ENCODE measurements at regions of chr17 and their contacts with region 1.

Region 1: GRCh38 chr17:72539981-72540897 is 419.4 kb downstream of the SOX9 start:
- DNase-seq: peak; percentile 45
- ATAC-seq: peak; percentile 93
- H3K4me3 ChIP-seq: peak overlapping the region; percentile 19 to 23
- H3K27ac ChIP-seq: peak overlapping the region; percentile 34
- H3K4me1 ChIP-seq: peaks cover 7 to 18% of the 10 kb centered on the region in 2 experiments
- H3K27me3 ChIP-seq: no peaks in the 10 kb centered on the region
- CTCF ChIP-seq: peak; percentile 45 to 91 (median 78); a peak in 5 of 6 replicates
- POLR2A ChIP-seq: no peak
- RAD21 ChIP-seq: peak; percentile 95

Region 2: GRCh38 chr17:70636517-70637133 is 1903.6 kb before region 1 on chr17:
- CTCF ChIA-PET with region 1: no interaction called
- POLR2A ChIA-PET with region 1: no interaction called
- RAD21 ChIA-PET with region 1: no interaction called
- intact Hi-C with region 1: loop called (anchors 2 kb)
- DNase-seq: peak; percentile 54
- ATAC-seq: peak; percentile 63
- H3K4me3 ChIP-seq: no peak overlapping the region
- H3K27ac ChIP-seq: no peak overlapping the region
- H3K4me1 ChIP-seq: no peaks in the 10 kb centered on the region
- H3K27me3 ChIP-seq: no peaks in the 10 kb centered on the region
- CTCF ChIP-seq: peak; percentile 61 to 86 (median 70); a peak in 5 of 6 replicates
- POLR2A ChIP-seq: no peak
- RAD21 ChIP-seq: peak; percentile 91

Region 3: DNA sequence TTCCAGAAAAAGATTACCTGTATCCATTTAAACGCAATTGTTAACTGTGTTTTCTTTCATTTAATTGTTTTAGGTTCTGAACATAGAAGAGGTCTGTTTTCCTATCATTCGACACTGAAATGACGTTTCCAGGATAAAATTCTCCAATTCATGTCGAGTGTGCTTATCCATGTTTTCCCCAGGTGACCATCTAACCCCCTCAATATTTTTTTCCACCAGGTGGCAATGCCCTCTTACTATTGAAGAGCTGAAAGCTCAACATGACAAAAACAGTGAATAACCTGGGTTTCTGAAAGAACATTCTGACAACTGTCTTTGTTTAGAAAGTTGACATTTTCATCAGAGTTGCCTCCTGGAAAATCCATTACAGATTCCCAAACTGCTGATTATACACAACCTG is 1422.2 kb before region 1 on chr17:
- CTCF ChIA-PET with region 1: interaction called, 5 read pairs
- POLR2A ChIA-PET with region 1: no interaction called
- RAD21 ChIA-PET with region 1: no interaction called
- intact Hi-C with region 1: loop called (anchors 1 kb)
- DNase-seq: peak; percentile 29
- ATAC-seq: peak; percentile 46; the same call in 1 of the 2 replicates
- H3K4me3 ChIP-seq: no peak overlapping the region
- H3K27ac ChIP-seq: no peak overlapping the region
- H3K4me1 ChIP-seq: no peaks in the 10 kb centered on the region
- H3K27me3 ChIP-seq: no peaks in the 10 kb centered on the region
- CTCF ChIP-seq: peak; percentile 55 to 77 (median 66); a peak in 5 of 6 replicates
- POLR2A ChIP-seq: no peak
- RAD21 ChIP-seq: peak; percentile 86

Region 4: GRCh38 chr17:71472809-71473789 is 1067.1 kb before region 1 on chr17:
- CTCF ChIA-PET with region 1: interaction called, 5 read pairs
- POLR2A ChIA-PET with region 1: no interaction called
- RAD21 ChIA-PET with region 1: no interaction called
- intact Hi-C with region 1: loop called (anchors 1 kb)
- DNase-seq: peak; percentile 86
- ATAC-seq: peak; percentile 99
- H3K4me3 ChIP-seq: no peak overlapping the region
- H3K27ac ChIP-seq: no peak overlapping the region
- H3K4me1 ChIP-seq: peaks cover 0 to 11% of the 10 kb centered on the region in 2 experiments; a peak in 2 of 4 replicates
- H3K27me3 ChIP-seq: no peaks in the 10 kb centered on the region
- CTCF ChIP-seq: peak; percentile 79 to 93 (median 88)
- POLR2A ChIP-seq: no peak
- RAD21 ChIP-seq: peak; percentile 89

Region 5: DNA sequence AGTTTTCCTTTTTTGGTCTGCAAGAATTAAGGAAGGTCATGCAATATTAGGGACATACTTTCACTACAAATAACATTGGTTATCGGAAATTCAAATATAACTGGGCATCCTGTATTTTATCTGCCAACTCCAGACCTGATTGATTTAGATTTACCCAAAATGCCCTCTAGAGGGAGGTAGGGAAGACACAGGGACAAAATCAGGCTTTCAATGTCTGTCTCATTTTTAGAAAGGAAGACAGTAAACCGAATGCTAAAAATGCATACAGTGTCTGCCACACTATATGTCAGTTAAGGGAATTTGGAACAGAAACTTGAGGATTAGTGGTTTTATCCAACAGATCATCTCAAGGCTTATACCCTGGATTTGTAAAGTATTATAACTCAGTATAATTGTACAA is 581.1 kb before region 1 on chr17:
- CTCF ChIA-PET with region 1: no interaction called
- POLR2A ChIA-PET with region 1: no interaction called
- RAD21 ChIA-PET with region 1: no interaction called
- intact Hi-C with region 1: loop called (anchors 5 kb)
- DNase-seq: peak; percentile 49
- ATAC-seq: peak; percentile 92
- H3K4me3 ChIP-seq: no peak overlapping the region
- H3K27ac ChIP-seq: no peak overlapping the region
- H3K4me1 ChIP-seq: no peaks in the 10 kb centered on the region
- H3K27me3 ChIP-seq: no peaks in the 10 kb centered on the region
- CTCF ChIP-seq: peak; percentile 58 to 84 (median 77); a peak in 5 of 6 replicates
- POLR2A ChIP-seq: no peak
- RAD21 ChIP-seq: peak; percentile 71

Region 6: DNA sequence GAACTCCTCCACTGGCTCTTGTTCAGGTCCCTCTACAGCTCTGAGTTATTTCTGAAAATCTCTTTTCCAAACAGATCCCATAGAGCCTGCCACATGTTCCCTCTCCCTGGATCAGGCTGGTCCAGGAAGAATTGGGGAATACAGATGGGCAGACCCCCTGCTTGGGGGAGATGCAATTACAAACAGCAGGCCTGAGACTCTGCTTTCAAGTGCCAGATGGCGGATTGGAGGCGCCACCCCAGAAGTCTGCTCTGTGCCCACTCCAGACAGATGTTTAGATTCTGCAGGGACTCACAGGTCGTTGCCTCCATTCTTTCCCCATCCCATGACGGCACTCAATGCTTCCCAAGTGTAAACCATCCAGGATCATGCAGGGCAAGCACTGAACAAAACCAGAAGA is 235.7 kb after region 1 on chr17:
- CTCF ChIA-PET with region 1: no interaction called
- POLR2A ChIA-PET with region 1: no interaction called
- RAD21 ChIA-PET with region 1: no interaction called
- intact Hi-C with region 1: no loop called
- DNase-seq: no peak
- ATAC-seq: no peak
- H3K4me3 ChIP-seq: no peak overlapping the region
- H3K27ac ChIP-seq: no peak overlapping the region
- H3K4me1 ChIP-seq: no peaks in the 10 kb centered on the region
- H3K27me3 ChIP-seq: no peaks in the 10 kb centered on the region
- CTCF ChIP-seq: no peak
- POLR2A ChIP-seq: no peak
- RAD21 ChIP-seq: no peak